Ovary (tissue), 10 donors: ENCODE measurements at regions of chr6 and their contacts with region 1.

Region 1: GRCh38 chr6:4533576-4533975 is 242.6 kb upstream of the CDYL start:
- DNase-seq: no peak
- H3K4me3 ChIP-seq: no peak overlapping the region
- H3K27ac ChIP-seq: no peak overlapping the region
- H3K4me1 ChIP-seq: no peaks in the 10 kb centered on the region
- H3K27me3 ChIP-seq: no peaks in the 10 kb centered on the region
- CTCF ChIP-seq: no peak
- EP300 ChIP-seq: no peak
- POLR2A ChIP-seq: no peak

Region 2: DNA sequence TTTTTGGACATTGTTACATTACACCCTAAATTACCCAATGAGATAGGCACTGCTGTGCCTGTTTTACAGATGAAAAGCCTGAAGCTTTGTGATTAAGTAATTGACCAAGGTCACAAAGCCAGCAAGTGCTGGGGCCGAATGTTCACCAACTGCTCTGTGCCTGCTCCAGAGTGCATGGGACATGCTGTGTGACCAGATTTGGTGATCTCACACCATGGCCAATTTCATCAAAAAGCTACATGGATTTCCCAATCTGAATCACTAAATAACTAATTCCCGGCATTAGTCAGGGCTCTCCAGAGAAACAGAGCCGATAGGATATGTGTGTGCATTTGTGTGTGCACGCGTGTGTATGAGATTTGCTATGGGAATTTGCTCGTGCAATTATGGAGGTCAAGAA is 169.9 kb before region 1 on chr6:
- intact Hi-C with region 1: no loop called
- DNase-seq: no peak
- H3K4me3 ChIP-seq: no peak overlapping the region
- H3K27ac ChIP-seq: no peak overlapping the region
- H3K4me1 ChIP-seq: peaks cover 6% of the 10 kb centered on the region
- H3K27me3 ChIP-seq: no peaks in the 10 kb centered on the region
- CTCF ChIP-seq: no peak
- EP300 ChIP-seq: no peak
- POLR2A ChIP-seq: no peak

Region 3: DNA sequence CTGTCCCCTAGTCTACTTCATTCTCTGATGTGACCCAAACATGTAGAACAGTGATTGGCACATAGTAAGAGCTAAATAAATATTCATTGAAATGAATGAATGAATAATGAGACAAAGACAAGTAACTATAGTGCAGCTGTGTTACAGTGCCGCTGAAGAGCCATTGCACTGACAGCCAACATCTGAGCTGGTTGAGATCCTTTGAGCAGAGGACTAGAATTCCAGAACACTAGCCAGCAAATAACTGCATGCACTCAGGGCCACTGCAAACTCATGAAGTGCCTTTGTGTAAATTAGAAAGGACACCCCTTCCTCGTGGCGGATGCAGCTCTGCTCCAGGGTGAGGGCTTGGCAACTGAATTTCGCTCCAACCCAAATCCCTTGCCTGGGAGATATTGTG is 12.3 kb after region 1 on chr6:
- intact Hi-C with region 1: loop called in 1 of 4 experiments (anchors 1 kb)
- DNase-seq: no peak
- H3K4me3 ChIP-seq: no peak overlapping the region
- H3K27ac ChIP-seq: no peak overlapping the region
- H3K4me1 ChIP-seq: no peaks in the 10 kb centered on the region
- H3K27me3 ChIP-seq: no peaks in the 10 kb centered on the region
- CTCF ChIP-seq: no peak
- EP300 ChIP-seq: no peak
- POLR2A ChIP-seq: no peak

Region 4: DNA sequence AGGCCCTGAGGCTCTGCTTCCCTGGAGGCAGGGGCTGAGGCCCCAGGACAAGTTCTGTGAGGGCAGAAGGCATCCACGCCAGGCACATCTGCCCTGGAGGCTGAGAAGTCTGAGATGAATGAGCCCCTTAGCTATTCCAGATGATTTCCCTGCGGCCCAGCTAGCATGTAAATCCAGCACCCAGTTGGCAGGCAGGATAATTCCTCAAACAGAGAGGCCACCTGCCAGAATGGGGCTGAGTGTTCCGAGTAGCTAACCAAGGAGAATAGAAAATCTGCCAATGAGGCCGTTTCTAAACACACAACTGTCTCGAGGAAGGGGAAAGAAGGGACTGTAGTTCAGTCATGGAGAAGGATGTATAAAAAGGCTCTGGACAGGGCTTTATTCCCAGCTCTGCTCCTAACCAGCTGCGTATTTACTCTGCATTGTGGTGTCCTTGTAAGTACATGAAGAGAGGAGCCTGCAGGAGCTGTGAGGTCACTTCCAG is 31.3 kb after region 1 on chr6:
- intact Hi-C with region 1: no loop called
- DNase-seq: no peak
- H3K4me3 ChIP-seq: no peak overlapping the region
- H3K27ac ChIP-seq: no peak overlapping the region
- H3K4me1 ChIP-seq: no peaks in the 10 kb centered on the region
- H3K27me3 ChIP-seq: no peaks in the 10 kb centered on the region
- CTCF ChIP-seq: no peak
- EP300 ChIP-seq: no peak
- POLR2A ChIP-seq: no peak